HCT116 (cell line): ENCODE measurements at regions of chr16 and their contacts with region 1.

Region 1: GRCh38 chr16:49921791-49922456 is 66.0 kb upstream of the ZNF423 start:
- DNase-seq: peak; percentile 51
- ATAC-seq: peak; percentile 92
- H3K4me3 ChIP-seq: no peak overlapping the region
- H3K27ac ChIP-seq: no peak overlapping the region
- H3K4me1 ChIP-seq: peaks cover 2 to 6% of the 10 kb centered on the region in 2 experiments; a peak in 1 of 4 replicates
- H3K27me3 ChIP-seq: no peaks in the 10 kb centered on the region
- CTCF ChIP-seq: peak; percentile 72 to 79 (median 72)
- POLR2A ChIP-seq: no peak
- RAD21 ChIP-seq: peak; percentile 89

Region 2: GRCh38 chr16:49407873-49408550 is 513.9 kb before region 1 on chr16:
- CTCF ChIA-PET with region 1: interaction called, 7 read pairs
- POLR2A ChIA-PET with region 1: no interaction called
- RAD21 ChIA-PET with region 1: no interaction called
- intact Hi-C with region 1: loop called (anchors 5 kb)
- DNase-seq: peak; percentile 78
- ATAC-seq: peak; percentile 99
- H3K4me3 ChIP-seq: no peak overlapping the region
- H3K27ac ChIP-seq: no peak overlapping the region
- H3K4me1 ChIP-seq: peaks cover 0 to 10% of the 10 kb centered on the region in 2 experiments; a peak in 2 of 4 replicates
- H3K27me3 ChIP-seq: 0 out of 2 replicates have a peak, but pooled peaks cover 2% of the 10 kb centered on the region
- CTCF ChIP-seq: peak; percentile 89 to 94 (median 90)
- POLR2A ChIP-seq: no peak
- RAD21 ChIP-seq: peak; percentile 98

Region 3: GRCh38 chr16:49491771-49492761 is 429.9 kb before region 1 on chr16:
- CTCF ChIA-PET with region 1: no interaction called
- POLR2A ChIA-PET with region 1: no interaction called
- RAD21 ChIA-PET with region 1: no interaction called
- intact Hi-C with region 1: loop called (anchors 2 kb)
- DNase-seq: peak; percentile 15
- ATAC-seq: peak; percentile 94
- H3K4me3 ChIP-seq: peak overlapping the region; percentile 36 to 50
- H3K27ac ChIP-seq: no peak overlapping the region; the same call in 1 of the 2 replicates
- H3K4me1 ChIP-seq: peaks cover 6 to 12% of the 10 kb centered on the region in 2 experiments; a peak in 2 of 4 replicates
- H3K27me3 ChIP-seq: no peaks in the 10 kb centered on the region
- CTCF ChIP-seq: peak; percentile 42 to 86 (median 84); a peak in 5 of 6 replicates
- POLR2A ChIP-seq: no peak
- RAD21 ChIP-seq: peak; percentile 48

Region 4: DNA sequence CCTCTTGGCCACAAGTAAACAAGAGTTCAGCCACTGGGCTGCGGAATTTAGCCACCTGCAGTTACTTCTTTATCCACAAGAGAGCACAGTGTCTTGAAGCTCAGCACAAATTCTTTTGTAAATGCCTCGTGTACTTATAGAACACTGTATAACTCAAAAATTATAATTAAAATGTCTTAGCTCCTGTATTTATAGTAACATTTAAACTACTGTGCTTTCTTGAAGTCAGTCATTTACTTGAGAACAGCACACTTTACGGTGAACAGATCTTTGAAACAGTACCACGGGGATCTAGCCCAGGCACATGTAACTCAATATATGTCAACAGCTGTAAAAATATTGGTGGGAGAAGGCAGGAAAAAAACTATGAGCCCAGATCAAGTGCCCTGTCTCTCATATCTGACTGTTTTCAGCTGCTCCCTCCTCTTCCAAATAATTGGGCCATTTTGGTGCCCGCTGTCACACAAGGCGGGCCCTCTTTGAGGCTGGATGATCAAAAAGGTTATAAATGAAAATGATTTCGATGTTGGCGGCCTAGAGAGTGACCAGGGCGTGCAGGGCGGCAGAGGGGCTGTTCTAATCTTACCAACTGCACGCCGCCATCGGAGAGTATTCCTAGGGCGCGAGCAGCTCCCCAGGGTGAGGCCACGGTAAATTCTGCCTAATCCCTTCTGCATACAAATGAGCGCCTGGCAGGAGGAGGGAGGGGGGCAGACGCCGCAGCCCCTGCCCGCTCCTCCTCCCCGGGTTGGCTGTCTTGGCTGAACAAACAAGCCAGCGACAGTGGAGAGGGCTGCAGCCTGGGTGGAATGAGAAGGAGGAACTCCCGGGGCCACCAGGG is 365.1 kb before region 1 on chr16:
- CTCF ChIA-PET with region 1: interaction called, 7 read pairs
- POLR2A ChIA-PET with region 1: no interaction called
- RAD21 ChIA-PET with region 1: no interaction called
- intact Hi-C with region 1: loop called (anchors 1 kb)
- DNase-seq: peak; percentile 4
- ATAC-seq: peak; percentile 77
- H3K4me3 ChIP-seq: no peak overlapping the region
- H3K27ac ChIP-seq: no peak overlapping the region
- H3K4me1 ChIP-seq: no peaks in the 10 kb centered on the region
- H3K27me3 ChIP-seq: peaks cover 8% of the 10 kb centered on the region; the same call in 1 of the 2 replicates
- CTCF ChIP-seq: peak; percentile 43 to 69 (median 50); a peak in 4 of 6 replicates
- POLR2A ChIP-seq: no peak
- RAD21 ChIP-seq: peak; percentile 43; the same call in 1 of the 2 replicates

Region 5: DNA sequence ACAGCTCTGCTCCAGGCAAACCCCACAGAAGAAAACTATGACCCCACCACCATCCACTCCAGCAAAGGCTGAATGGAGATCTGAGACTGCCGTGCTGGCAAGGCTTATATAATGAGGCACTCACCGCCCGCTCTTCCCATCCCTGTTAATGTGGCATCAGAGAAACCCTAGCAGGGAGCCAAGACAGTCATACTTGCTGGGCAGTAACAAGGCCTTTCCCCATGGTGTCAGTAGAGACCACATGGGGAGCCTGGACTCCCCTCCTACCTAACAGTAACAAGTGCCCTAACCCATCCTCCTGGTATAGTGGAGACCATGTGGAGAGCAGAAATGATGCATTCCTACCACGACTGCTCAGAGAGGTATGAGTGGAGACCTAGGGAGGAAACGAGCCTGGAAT is 313.1 kb before region 1 on chr16:
- CTCF ChIA-PET with region 1: no interaction called
- POLR2A ChIA-PET with region 1: no interaction called
- RAD21 ChIA-PET with region 1: no interaction called
- intact Hi-C with region 1: loop called (anchors 2 kb)
- DNase-seq: peak; percentile 24
- ATAC-seq: peak; percentile 80
- H3K4me3 ChIP-seq: no peak overlapping the region
- H3K27ac ChIP-seq: no peak overlapping the region
- H3K4me1 ChIP-seq: no peaks in the 10 kb centered on the region
- H3K27me3 ChIP-seq: peaks cover 71% of the 10 kb centered on the region
- CTCF ChIP-seq: peak; percentile 40 to 57 (median 48); a peak in 5 of 6 replicates
- POLR2A ChIP-seq: no peak
- RAD21 ChIP-seq: peak; percentile 65

Region 6: GRCh38 chr16:49855280-49855821 is 66.6 kb before region 1 on chr16:
- CTCF ChIA-PET with region 1: interaction called, 23 read pairs
- POLR2A ChIA-PET with region 1: no interaction called
- RAD21 ChIA-PET with region 1: interaction called in 1 of 2 experiments, 5 read pairs
- intact Hi-C with region 1: loop called (anchors 5 kb)
- DNase-seq: no peak
- ATAC-seq: peak; percentile 57
- H3K4me3 ChIP-seq: peak overlapping the region; percentile 37 to 58
- H3K27ac ChIP-seq: no peak overlapping the region; the same call in 1 of the 2 replicates
- H3K4me1 ChIP-seq: peaks cover 8 to 26% of the 10 kb centered on the region in 2 experiments; a peak in 3 of 4 replicates
- H3K27me3 ChIP-seq: peaks cover 42% of the 10 kb centered on the region
- CTCF ChIP-seq: no peak
- POLR2A ChIP-seq: no peak
- RAD21 ChIP-seq: no peak

Region 7: DNA sequence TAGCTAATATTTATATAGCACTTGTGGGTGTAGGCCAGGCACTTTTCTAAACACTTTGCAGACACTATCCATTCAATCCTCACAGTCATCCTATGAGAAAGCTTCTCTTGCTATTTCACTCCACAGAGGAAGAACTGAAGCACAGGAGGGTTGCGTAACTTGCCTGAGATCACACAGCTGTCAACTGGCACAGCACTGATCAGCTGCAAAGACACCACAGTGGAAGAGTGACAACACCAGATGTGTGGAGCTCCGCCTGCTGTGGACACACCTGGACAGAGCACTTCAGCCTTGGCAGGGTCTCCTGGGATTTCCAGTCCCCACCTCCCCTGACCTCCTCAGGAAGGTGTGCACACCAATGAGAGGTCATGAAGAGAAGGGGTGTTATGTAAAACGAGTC is 89.8 kb after region 1 on chr16:
- CTCF ChIA-PET with region 1: no interaction called
- POLR2A ChIA-PET with region 1: no interaction called
- RAD21 ChIA-PET with region 1: no interaction called
- intact Hi-C with region 1: no loop called
- DNase-seq: no peak
- ATAC-seq: no peak
- H3K4me3 ChIP-seq: no peak overlapping the region
- H3K27ac ChIP-seq: no peak overlapping the region
- H3K4me1 ChIP-seq: no peaks in the 10 kb centered on the region
- H3K27me3 ChIP-seq: no peaks in the 10 kb centered on the region
- CTCF ChIP-seq: no peak
- POLR2A ChIP-seq: no peak
- RAD21 ChIP-seq: no peak